ENCODE measurements at regions of chr3 and their contacts with region 1.

Region 1: DNA sequence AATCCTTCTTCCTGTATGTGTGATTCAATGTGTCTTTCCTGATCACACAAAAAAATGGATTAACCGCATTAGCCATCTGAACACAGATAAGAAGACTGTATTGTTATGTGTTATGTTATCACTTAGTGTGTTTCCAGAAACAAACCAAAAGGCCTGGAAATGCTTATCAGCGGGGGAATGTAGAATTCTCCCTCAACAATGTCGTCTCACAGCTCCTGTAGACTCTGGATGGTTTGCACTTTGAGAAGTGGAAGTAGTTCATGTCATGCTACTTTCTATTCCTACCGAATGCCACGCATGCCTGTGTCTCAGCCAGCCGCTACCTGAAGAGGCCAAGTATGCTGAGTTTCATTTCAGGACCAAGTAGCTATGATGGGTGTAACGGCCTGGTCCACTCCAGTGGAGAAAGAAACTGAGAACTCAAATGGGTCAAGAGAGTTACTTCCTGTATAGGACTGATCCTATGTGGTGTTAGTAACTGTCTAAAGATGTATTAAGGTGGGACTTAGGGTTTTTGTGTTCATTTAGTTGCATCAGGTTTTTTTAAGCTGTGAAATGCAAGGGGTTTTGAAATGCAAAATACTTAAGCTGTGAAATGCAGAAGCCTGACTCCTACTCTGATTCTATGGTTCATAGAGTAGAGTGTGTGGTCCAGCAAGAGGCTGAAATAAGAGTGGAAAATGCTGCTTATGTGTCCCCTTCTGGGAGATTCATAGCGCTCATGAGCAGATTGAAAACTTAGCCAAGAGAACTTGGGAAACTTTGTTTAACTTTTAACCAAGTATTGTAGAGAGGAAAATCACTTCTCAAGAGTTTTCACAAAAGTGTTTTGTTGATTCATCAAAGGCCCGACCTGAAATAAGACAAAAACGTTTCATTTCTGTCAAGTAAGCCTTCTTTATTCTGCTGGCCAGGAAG is 118.5 kb upstream of the LMOD3 start:
- DNase-seq: no peak
- ATAC-seq: no peak
- H3K4me3 ChIP-seq: no peak overlapping the region
- H3K27ac ChIP-seq: no peak overlapping the region
- H3K4me1 ChIP-seq: peaks cover 0 to 4% of the 10 kb centered on the region in 2 experiments; a peak in 2 of 5 replicates
- H3K27me3 ChIP-seq: peaks cover 2 to 27% of the 10 kb centered on the region in 2 experiments; a peak in 4 of 5 replicates
- CTCF ChIP-seq: no peak
- EP300 ChIP-seq: no peak
- POLR2A ChIP-seq: no peak
- RAD21 ChIP-seq: no peak

Region 2: DNA sequence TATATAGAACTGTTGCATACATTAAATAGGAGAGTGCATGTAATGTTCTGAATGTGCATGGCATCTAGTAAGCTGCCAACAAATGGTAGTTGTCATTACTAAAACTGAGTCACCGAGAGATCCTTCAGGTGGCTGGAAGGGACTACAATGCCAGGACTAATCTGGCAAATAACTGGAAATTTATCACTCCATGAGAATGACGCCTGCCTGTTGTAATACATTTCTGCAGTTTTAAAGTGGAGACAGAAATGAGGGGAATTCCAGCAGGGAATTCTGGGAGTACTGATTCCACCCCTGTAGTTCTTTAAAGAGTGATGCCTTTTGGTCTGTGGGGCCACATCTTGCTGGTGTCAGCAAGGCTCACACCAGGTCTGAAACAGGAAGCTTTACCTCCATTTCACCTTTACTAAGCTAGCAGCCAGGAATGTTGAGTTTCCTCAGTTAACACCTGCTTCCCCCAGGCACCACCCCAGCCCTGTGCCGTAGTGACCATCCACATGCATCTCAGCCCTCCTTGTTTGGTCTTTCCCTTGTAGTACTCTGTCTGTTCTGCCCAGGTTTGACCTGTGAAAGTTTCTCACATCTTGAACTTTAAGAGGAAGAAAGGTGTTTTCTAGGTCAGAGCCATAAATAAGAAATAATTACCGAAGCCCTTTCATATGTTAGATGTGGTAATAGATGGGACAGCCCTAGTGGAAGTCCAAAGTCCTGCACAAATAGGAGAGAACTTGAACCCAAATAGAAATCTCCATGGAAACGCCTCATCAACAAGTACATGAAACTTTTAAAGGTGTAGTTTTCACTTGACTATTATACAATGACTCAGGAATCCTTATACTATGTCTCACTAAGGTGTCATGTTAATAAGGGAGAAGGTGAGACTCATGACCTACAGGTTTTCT is 61.8 kb before region 1 on chr3:
- CTCF ChIA-PET with region 1: no interaction called
- POLR2A ChIA-PET with region 1: no interaction called
- in situ Hi-C with region 1: no loop called
- intact Hi-C with region 1: loop called (anchors 10 kb)
- DNase-seq: no peak
- ATAC-seq: no peak
- H3K4me3 ChIP-seq: no peak overlapping the region
- H3K27ac ChIP-seq: no peak overlapping the region
- H3K4me1 ChIP-seq: no peaks in the 10 kb centered on the region; a peak in 1 of 5 replicates
- H3K27me3 ChIP-seq: peaks cover 2 to 9% of the 10 kb centered on the region in 2 experiments; a peak in 3 of 5 replicates
- CTCF ChIP-seq: no peak
- EP300 ChIP-seq: no peak
- POLR2A ChIP-seq: no peak
- RAD21 ChIP-seq: no peak

Region 3: GRCh38 chr3:69212411-69213139 is 28.3 kb before region 1 on chr3:
- CTCF ChIA-PET with region 1: no interaction called
- POLR2A ChIA-PET with region 1: no interaction called
- in situ Hi-C with region 1: no loop called
- intact Hi-C with region 1: no loop called
- DNase-seq: peak in 1 of 4 experiments; percentile 5
- ATAC-seq: no peak
- H3K4me3 ChIP-seq: no peak overlapping the region
- H3K27ac ChIP-seq: no peak overlapping the region
- H3K4me1 ChIP-seq: no peaks in the 10 kb centered on the region; a peak in 1 of 5 replicates
- H3K27me3 ChIP-seq: no peaks in the 10 kb centered on the region; a peak in 1 of 5 replicates
- CTCF ChIP-seq: no peak
- EP300 ChIP-seq: peak; percentile 37; the same call in 1 of the 2 replicates
- POLR2A ChIP-seq: no peak
- RAD21 ChIP-seq: no peak

Region 4: DNA sequence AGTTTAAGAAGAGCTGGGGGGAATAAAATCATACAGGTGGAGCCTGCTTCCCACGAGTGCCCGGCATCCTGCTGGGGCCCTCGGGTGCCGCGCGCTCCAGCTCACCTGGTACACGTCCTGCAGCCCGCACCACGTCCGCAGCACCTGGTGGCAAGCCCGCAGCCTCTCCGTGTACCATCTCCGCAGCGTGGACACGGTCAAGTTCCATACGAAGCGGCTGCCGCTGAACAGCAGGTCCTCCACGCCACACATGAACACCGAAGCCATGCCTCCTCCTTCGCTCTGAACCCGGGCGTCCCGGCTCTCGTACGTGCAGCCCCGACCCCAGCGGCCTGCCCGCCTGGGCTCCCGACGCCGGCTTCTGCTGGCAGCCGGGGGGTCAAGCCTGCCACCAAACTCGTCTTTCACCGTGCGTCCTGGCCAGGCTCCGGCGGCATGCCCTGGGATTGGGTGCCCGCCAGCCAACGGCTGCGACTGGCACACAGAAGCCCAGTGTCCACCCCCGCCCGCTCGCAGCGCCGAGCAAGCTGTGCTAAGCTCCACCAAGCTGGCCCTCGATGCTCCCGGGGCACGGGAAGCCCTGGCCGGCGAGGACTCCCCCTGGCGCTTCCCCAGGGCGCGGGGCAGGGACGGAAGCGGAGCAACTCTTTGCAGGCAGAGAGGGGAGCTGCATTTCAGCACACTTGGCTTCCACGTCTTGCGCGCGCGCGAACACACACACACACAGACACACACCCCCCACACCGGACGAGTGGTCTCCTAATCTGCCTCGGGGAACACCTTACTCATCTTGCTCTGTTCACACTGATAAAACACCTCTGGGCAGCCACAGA is 145.0 kb after region 1 on chr3 and contains the start of gene FRMD4B:
- CTCF ChIA-PET with region 1: no interaction called
- POLR2A ChIA-PET with region 1: no interaction called
- in situ Hi-C with region 1: no loop called
- intact Hi-C with region 1: no loop called
- DNase-seq: peak in 1 of 4 experiments; percentile 6
- ATAC-seq: peak; percentile 63
- H3K4me3 ChIP-seq: no peak within 1 kb of the TSS
- H3K27ac ChIP-seq: no peak within 1 kb of the TSS
- H3K4me1 ChIP-seq: peaks cover 0 to 8% of the 10 kb centered on the region in 2 experiments; a peak in 2 of 5 replicates
- H3K27me3 ChIP-seq: peaks cover 0 to 22% of the 10 kb centered on the region in 2 experiments; a peak in 2 of 5 replicates
- CTCF ChIP-seq: 0 out of 6 replicates have a peak, but pooled peaks of 1 of the 3 experiments have one; percentile 4
- EP300 ChIP-seq: no peak
- POLR2A ChIP-seq: no peak
- RAD21 ChIP-seq: no peak
- polyA plus RNA-seq, gene FRMD4B: 0.04 TPM in 1 of 2 experiments, not detected in the other

Measured in K562 (cell line).